Spleen (tissue), 13 donors: ENCODE measurements at regions of chr1 and their contacts with region 1.

Region 1: DNA sequence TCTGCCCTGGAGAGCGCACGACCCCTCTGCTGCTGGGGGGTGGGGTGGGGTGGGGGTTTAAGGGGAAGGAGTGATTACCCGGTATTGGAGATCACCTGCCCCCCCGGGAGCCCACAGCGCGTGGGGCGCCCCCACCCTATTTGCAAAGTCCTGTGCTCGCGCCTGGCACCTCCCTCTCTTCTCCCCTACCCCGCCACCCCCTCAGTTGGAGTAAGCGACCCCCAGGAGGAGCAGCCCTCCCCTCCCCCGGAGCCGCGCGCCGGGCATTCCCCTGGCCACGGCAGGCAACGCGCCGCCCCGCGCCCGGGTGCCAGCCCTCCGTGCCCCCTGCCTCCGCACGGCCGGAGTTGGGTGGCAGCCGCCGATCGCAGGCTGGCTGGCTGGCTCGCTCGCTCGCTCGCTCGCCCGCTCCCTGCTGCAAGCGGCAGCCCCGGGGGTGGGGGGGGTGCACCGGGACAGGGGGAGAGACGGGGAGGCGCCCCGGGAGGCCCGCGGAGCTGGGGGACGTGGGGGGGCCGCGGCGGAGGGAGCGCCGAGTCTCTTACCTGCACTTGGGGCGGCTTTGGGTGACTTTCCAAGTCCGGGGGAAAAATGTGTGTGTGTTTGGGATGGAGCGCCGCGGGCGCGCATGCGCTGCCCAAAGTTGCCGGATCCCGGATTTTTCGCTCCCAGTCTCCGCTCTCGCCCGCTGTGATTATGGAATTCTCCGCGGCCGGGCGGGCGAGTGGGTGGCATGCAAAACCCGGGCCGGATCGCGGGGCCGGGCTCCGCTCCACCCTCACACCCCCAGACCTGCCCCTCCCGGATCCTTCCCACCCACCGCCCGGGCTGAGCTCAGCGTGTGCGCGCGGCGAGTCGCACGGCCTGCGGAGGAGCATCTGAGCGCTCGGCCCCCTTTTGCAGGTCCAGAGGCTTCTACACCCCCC is at the start of gene CASZ1:
- DNase-seq: no peak
- H3K4me3 ChIP-seq: peak within 1 kb of the TSS; percentile 13 to 73 (median 52)
- H3K27ac ChIP-seq: no peak within 1 kb of the TSS
- H3K4me1 ChIP-seq: peaks cover 16 to 44% (median 38%) of the 10 kb centered on the region in 6 donors
- H3K27me3 ChIP-seq: peaks cover 0 to 100% (median 56%) of the 10 kb centered on the region in 7 donors
- CTCF ChIP-seq: no peak
- POLR2A ChIP-seq: no peak
- total RNA-seq, gene CASZ1: 5.8 to 14.5 (median 11.7) TPM

Region 2: DNA sequence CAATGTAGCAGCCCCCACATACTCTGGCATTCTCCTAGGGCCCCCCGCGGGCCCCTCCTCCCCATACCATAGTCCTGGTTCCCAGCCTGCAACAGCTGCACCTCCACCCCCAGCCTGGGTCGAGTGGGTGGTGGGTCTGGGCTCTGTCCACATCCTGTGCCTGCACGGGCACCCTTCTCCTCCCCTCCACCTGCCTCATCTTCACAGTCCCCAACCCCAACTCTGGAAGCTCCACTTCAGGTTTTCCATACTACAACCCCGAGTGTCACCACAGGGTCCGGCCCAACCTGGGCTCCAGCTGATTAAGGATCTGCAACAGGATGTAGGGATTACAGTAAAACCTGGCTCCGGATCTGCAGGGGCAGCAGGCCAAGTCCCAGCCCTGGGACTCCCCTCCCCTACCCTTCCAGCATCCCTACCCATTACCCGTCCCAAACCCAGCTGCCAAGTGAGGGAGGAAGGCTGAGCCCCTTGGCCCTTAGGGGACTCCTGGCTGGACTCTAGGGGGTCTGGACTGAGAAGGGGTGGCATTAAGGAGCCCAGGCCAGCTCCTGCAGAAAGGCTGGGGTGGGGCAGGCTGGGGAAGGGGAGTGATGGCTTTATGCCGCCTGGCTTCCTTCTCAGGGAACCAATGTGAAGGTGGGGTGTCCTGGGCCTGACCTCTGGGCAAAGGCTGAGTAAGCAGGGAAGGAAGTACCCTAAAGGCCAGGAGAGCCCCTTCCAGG is 116.6 kb before region 1 on chr1:
- intact Hi-C with region 1: loop called (anchors 10 kb)
- DNase-seq: no peak
- H3K4me3 ChIP-seq: no peak overlapping the region
- H3K27ac ChIP-seq: no peak overlapping the region
- H3K4me1 ChIP-seq: peaks cover 0 to 55% (median 11%) of the 10 kb centered on the region in 6 donors
- H3K27me3 ChIP-seq: no peaks in the 10 kb centered on the region
- CTCF ChIP-seq: no peak
- POLR2A ChIP-seq: no peak